ENCODE measurements at regions of chr9 and their contacts with region 1.

Region 1: DNA sequence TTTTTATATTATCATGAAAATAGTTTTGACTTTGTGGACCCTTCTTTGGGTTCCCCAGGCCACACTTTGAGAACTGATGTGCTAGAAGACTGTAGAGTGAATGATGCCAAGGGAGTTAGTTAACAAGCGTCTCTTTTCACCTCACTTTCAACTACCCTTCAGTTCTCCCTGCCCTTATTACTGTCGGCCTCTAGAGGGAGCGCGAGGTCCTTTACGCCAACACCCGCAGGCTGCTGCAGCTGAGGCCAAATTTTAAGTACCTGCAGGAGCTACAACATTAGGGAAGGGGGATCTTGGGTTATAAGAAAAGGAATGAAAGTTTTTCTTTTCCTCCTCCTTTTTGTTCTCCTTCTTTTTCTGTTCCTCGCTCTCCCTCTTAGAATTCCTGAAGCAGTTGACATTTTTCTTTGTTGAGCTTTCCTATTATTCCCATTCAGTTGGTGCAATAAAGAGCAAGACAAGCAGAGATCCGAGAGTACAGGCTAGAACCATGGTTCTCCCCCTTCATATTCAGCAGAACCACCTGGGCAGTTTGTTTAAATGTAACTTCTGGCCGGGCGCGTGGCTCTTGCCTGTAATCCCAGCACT is 84.0 kb downstream of the ZFAND5 start:
- DNase-seq: peak; percentile 83
- ATAC-seq: peak; percentile 81
- H3K4me3 Mint-ChIP-seq: no peak overlapping the region
- H3K27ac Mint-ChIP-seq: no peak overlapping the region
- H3K4me1 Mint-ChIP-seq: no peaks in the 10 kb centered on the region
- H3K27me3 Mint-ChIP-seq: no peaks in the 10 kb centered on the region

Region 2: DNA sequence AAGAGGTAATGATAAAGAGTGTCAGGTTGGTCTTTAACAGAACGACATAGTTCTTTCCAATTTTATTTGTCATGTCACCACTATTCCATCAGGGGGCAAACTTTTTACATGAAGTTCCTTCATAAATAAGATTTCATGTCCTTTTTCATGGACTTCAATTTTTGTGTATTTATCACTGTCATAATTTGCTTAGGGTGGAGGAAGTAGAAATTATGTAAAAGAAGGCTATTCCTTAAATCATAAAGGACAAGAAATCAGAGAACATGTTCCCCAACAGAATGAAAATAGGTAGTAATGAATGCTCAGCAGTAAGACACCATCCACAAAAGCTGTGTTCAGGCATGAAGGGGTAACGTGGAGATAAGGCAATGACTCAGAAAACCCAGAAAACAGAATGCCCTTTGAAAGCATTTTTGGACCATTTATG is 11.3 kb after region 1 on chr9:
- CTCF ChIA-PET with region 1: interaction called, 30 read pairs
- POLR2A ChIA-PET with region 1: no interaction called
- intact Hi-C with region 1: no loop called
- DNase-seq: no peak
- ATAC-seq: no peak
- H3K4me3 Mint-ChIP-seq: no peak overlapping the region
- H3K27ac Mint-ChIP-seq: no peak overlapping the region
- H3K4me1 Mint-ChIP-seq: peaks cover 3% of the 10 kb centered on the region
- H3K27me3 Mint-ChIP-seq: peaks cover 3% of the 10 kb centered on the region

Region 3: DNA sequence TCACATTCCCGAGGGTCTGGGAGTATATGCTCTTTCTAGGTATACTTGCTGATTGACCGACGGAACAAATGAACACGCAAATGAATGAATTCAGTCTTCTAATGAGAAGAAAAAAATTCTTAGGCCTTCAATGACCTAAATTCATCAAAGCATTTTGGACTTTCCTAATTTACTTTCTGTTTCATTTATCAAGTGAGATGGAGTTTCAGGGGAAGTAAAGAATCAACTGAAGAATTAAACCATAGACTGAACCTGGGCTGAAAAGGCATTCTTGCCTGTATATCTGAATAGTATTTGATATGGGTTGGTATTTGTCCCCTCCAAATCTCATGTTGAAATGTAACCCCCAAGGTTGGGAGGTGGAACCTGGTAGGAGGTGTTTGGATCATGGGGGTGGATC is 19.9 kb after region 1 on chr9:
- CTCF ChIA-PET with region 1: interaction called, 19 read pairs
- POLR2A ChIA-PET with region 1: no interaction called
- intact Hi-C with region 1: no loop called
- DNase-seq: no peak
- ATAC-seq: no peak
- H3K4me3 Mint-ChIP-seq: no peak overlapping the region
- H3K27ac Mint-ChIP-seq: no peak overlapping the region
- H3K4me1 Mint-ChIP-seq: peaks cover 24% of the 10 kb centered on the region
- H3K27me3 Mint-ChIP-seq: no peaks in the 10 kb centered on the region

Region 4: DNA sequence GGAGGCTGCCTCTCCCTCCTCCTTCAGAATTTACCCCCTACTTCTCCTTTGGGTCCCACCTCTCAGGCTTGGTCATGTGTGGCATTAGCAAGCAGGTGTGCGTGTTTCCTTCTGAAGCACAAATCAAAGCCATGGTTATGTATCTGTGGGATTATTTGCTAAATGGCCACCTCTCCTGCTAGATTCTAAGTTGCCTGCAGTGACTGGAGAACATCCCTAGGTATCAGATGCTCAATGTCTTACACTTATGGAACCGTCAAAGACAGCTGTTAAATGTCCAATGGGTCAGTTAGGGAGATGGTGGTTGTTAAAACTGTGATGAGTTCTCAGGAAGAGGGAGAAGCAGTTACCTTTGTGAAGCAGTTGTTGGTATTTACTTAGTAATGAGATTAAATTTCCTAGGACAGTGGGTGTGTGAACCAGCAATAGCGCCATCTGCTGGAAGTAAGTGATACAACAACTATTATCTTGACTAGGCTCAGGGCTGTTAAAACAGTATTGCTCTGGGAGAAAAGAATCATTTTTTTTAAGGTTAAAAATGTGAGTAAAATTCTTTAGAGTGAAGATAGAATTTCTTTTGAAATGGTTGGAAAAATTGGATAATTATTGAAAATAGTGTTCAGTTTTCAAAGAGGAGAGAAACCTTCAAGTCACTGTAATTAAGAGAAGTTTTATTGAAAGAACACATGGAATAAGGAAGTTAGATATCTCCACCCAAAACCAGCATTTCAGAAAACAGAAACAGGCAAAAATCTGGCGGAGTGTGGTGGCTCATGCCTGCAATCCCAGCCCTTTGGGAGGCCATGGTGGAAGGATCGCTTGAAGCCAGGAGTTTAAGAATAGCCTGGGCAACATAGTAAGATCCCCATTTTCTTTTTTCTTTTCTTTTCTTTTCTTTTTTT is 311.7 kb after region 1 on chr9:
- CTCF ChIA-PET with region 1: interaction called, 74 read pairs
- POLR2A ChIA-PET with region 1: no interaction called
- intact Hi-C with region 1: loop called (anchors 1 kb)
- DNase-seq: peak; percentile 29
- ATAC-seq: peak; percentile 69
- H3K4me3 Mint-ChIP-seq: no peak overlapping the region
- H3K27ac Mint-ChIP-seq: no peak overlapping the region
- H3K4me1 Mint-ChIP-seq: peaks cover 19% of the 10 kb centered on the region
- H3K27me3 Mint-ChIP-seq: peaks cover 6% of the 10 kb centered on the region

Region 5: GRCh38 chr9:72827950-72828731 is 547.1 kb after region 1 on chr9:
- CTCF ChIA-PET with region 1: interaction called, 15 read pairs
- POLR2A ChIA-PET with region 1: no interaction called
- intact Hi-C with region 1: loop called in 1 of 2 experiments (anchors 2 kb)
- DNase-seq: no peak
- ATAC-seq: no peak
- H3K4me3 Mint-ChIP-seq: no peak overlapping the region
- H3K27ac Mint-ChIP-seq: no peak overlapping the region
- H3K4me1 Mint-ChIP-seq: no peaks in the 10 kb centered on the region
- H3K27me3 Mint-ChIP-seq: peaks cover 6% of the 10 kb centered on the region

Region 6: DNA sequence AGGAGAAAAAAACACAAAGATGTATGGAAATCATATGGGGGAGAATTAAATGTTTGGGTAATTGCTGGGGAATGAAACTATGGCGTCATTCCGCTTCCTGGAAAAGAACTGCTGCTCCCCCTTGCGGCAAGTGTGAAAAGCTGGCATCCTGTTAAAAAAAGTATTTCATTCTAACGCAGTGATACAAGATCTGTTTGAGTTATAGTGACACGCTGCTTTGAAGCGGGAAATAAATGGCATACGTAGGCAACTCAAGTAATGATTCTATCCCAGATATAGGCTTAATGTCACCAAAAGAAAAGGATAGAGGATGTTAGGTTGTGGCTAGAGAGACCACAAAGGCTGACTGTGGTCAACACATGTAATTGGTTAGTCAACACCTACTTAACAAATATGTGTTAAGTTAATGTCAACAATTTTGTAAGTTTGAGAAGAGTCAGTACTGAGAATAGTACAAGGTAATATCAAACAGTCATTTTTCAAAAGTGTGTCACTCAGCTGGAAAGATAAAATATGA is 742.1 kb after region 1 on chr9:
- CTCF ChIA-PET with region 1: interaction called, 14 read pairs
- POLR2A ChIA-PET with region 1: no interaction called
- intact Hi-C with region 1: loop called (anchors 2 to 5 kb)
- DNase-seq: peak; percentile 72
- ATAC-seq: peak; percentile 74
- H3K4me3 Mint-ChIP-seq: no peak overlapping the region
- H3K27ac Mint-ChIP-seq: no peak overlapping the region
- H3K4me1 Mint-ChIP-seq: peaks cover 8% of the 10 kb centered on the region
- H3K27me3 Mint-ChIP-seq: peaks cover 11% of the 10 kb centered on the region

Region 7: DNA sequence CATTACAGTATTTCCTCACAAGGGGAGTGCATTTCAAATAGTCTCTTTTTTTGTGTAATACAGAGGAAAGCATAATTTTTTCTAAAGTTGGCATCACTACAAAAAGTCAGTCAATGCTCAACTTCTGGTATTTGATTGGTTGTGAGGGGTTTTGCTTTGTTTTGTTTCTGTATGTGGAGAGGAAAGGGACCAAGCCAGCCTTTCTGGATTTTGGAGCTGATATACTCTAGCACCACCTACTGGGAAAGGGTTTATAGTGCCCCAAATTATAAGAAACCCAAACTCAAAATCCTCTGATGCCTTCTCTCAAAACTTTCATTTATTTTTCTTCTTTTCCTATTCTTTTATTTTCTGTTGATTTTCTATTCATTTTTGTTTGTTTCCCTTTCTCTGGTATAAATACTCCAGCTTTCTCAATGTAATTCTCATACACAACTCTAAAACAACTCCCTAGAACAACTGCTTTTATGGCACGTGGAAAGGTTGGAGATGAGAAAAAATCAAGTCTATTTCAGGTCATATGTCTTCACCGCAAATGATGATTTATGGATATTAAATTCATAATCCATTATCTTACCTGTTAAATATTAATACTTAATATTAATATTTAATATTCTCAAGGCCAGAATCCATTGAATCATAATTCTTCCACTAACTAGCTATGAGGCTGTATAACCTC is 801.1 kb after region 1 on chr9:
- CTCF ChIA-PET with region 1: interaction called, 11 read pairs
- POLR2A ChIA-PET with region 1: no interaction called
- intact Hi-C with region 1: loop called in 1 of 2 experiments (anchors 5 kb)
- DNase-seq: no peak
- ATAC-seq: no peak
- H3K4me3 Mint-ChIP-seq: no peak overlapping the region
- H3K27ac Mint-ChIP-seq: no peak overlapping the region
- H3K4me1 Mint-ChIP-seq: no peaks in the 10 kb centered on the region
- H3K27me3 Mint-ChIP-seq: peaks cover 3% of the 10 kb centered on the region

Measured in activated CD4-positive, alpha-beta T cell treated with anti-CD3 and anti-CD28 coated beads for 36 hours (primary cell).